ENCODE measurements at regions of chr16 and their contacts with region 1.

Region 1: DNA sequence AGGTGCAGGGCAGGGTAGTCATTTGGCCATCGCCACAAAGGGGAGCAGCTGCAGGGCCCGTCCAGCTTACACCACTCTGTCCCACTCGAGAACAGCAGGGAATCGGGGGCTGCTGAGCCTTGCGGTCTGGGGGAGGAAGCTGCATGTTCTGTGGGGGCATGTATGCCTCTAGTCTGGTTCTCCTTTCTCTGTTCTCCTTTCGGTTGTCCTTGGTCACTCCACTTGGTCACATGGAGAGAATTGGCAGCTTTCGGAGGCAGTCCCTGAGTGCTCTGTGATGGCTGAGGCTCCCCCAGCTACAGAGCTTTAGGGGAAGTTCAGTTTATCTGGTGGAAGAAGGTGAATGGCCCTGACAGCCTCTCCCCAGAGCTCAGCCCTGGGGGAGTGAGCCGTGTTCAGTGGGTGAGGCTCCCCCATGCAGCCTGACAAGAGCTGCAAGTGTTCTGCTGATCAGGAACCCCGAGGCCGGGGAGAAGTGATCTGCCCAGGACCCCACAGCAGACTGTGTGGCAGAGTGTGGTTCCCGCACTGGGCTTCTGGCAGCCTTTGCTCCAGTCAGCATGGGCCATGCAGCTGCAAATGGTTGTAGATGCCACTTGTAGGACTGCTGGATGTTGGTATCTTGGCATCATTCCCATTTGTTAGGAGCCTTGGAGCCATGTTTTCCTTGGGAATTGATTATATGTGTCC is 22.3 kb upstream of the SMPD3 start:
- DNase-seq: peak; percentile 42
- H3K4me3 ChIP-seq: peak overlapping the region; percentile 45
- H3K27ac ChIP-seq: no peak overlapping the region
- H3K4me1 ChIP-seq: peaks cover 33% of the 10 kb centered on the region
- CTCF ChIP-seq: no peak

Region 2: GRCh38 chr16:68356249-68356918 is 114.2 kb before region 1 on chr16:
- CTCF ChIA-PET with region 1: no interaction called
- POLR2A ChIA-PET with region 1: no interaction called
- intact Hi-C with region 1: no loop called
- DNase-seq: peak; percentile 24
- H3K4me3 ChIP-seq: no peak overlapping the region
- H3K27ac ChIP-seq: no peak overlapping the region
- H3K4me1 ChIP-seq: peaks cover 8% of the 10 kb centered on the region
- CTCF ChIP-seq: no peak

Region 3: DNA sequence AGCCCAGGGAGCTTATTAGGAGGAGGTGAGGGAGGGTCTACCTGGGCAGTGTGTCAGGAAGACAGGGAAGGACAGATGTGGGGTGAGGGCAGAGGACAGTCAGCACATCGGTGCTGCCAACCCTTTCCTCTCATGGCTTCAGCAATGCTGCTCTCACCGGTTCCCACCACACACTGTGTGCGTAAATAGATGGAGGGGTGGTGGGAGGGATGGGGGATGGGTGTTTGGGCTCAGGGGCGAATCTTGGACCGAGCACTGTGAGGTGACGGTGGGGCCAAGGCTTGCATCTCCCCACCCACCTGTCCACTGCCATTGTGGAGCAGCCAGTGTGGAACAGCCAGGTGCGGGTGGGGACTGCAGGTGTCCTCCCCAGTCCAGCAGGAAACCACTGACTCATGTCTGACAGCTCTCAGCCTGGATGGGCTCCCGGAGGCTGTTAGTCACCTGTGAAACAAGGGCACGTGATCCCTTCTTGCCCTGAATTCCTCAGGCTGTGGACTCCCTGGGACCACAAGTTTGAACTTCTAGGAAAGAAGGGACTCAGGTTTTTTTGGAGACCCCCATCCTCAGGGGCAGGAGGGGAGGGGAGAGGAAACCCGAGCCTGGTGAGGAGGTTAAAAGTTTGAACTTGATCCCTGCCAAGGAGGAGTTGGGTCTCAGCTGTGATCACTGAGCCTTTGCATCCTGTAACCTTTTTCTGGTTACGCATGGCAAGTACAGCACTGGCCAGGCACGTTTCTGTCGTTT is 20.4 kb after region 1 on chr16:
- CTCF ChIA-PET with region 1: interaction called, 3 read pairs
- POLR2A ChIA-PET with region 1: interaction called, 31 read pairs
- intact Hi-C with region 1: loop called (anchors 1 kb)
- DNase-seq: peak; percentile 85
- H3K4me3 ChIP-seq: peak overlapping the region; percentile 61
- H3K27ac ChIP-seq: peak overlapping the region; percentile 79
- H3K4me1 ChIP-seq: peaks cover 75% of the 10 kb centered on the region
- CTCF ChIP-seq: no peak

Measured in OCI-LY7 (cell line).